CD4-positive, alpha-beta T cell (primary cell): ENCODE measurements at regions of chr6 and their contacts with region 1.

Region 1: DNA sequence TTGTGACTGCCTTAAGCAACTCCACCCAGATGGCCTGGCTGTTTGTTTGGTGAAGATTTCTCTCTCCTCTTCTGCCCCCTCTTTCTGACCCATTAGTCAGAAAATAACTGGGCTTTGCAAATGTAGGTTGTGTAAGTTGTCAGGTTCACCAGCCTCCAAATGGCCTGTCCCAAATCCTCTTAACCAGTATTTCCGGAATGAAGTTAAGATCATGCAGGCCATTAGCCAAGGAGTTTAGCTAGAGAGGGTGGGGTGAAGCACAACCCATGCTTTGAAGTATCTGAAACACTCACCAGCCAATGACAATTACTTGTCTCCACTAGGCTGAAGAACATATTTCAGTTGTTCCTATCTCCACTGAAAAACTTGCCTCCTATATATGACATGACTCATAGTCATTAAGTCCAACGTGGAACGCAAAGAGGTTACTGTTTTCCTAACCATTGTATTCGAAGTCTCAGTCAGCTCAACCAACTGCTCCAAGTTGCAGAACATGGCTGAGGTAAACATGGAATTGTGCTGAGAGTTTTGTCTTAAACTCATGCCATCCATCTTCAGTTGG is 37.5 kb upstream of the TNFAIP3 start:
- DNase-seq: no peak
- ATAC-seq: no peak
- H3K4me3 ChIP-seq: no peak overlapping the region
- H3K4me3 Mint-ChIP-seq: no peak overlapping the region
- H3K27ac ChIP-seq: no peak overlapping the region
- H3K27ac Mint-ChIP-seq: peak overlapping the region; percentile 96
- H3K4me1 ChIP-seq: peaks cover 22% of the 10 kb centered on the region
- H3K4me1 Mint-ChIP-seq: peaks cover 45% of the 10 kb centered on the region
- H3K27me3 ChIP-seq: no peaks in the 10 kb centered on the region
- H3K27me3 Mint-ChIP-seq: no peaks in the 10 kb centered on the region
- CTCF ChIP-seq: no peak

Region 2: GRCh38 chr6:137843211-137843610 is 13.6 kb after region 1 on chr6:
- CTCF ChIA-PET with region 1: no interaction called
- POLR2A ChIA-PET with region 1: interaction called, 4 read pairs
- intact Hi-C with region 1: loop called in 1 of 2 experiments (anchors 1 kb)
- DNase-seq: no peak
- ATAC-seq: no peak
- H3K4me3 ChIP-seq: no peak overlapping the region
- H3K4me3 Mint-ChIP-seq: no peak overlapping the region
- H3K27ac ChIP-seq: no peak overlapping the region
- H3K27ac Mint-ChIP-seq: no peak overlapping the region
- H3K4me1 ChIP-seq: no peaks in the 10 kb centered on the region
- H3K4me1 Mint-ChIP-seq: no peaks in the 10 kb centered on the region
- H3K27me3 ChIP-seq: no peaks in the 10 kb centered on the region
- H3K27me3 Mint-ChIP-seq: no peaks in the 10 kb centered on the region
- CTCF ChIP-seq: no peak

Region 3: DNA sequence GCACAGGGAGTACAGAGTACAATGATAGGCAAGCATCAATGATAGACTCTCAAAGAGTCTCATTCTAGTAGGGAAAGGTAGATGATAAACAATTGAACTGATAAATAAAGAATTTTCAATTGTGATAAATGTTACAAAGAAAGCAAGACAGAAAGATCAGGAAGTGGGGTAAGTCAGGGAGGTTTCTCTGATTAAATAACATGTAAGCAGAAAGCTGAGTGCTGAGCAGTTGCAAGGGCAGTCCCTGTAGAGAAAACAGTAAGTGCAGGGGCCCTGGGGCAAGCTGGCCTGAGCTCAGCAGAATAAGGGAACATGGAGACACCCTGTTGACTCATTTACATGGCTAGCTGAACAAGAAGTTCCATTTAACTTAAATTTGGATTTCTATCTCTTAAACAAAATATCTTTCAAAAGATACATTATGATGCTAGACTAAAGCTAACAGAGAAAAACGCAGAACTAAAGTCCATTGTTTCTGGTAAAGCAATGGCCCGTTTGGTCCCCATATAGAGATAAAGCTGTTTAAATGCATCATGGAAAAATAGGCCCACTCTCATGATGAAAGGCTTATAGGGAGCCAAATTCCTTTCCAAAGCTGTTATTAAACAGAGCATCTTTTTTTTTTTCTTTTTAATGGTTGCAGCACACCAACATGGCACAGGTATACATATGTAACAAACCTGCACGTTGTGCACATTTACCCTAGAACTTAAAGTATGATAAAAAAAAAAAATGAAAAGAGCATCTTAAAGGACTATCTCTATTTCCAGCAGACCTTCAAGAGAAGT is 32.1 kb after region 1 on chr6:
- CTCF ChIA-PET with region 1: interaction called, 48 read pairs
- POLR2A ChIA-PET with region 1: interaction called, 131 read pairs
- intact Hi-C with region 1: loop called (anchors 1 to 2 kb)
- DNase-seq: peak in 2 of 14 experiments; percentile 20 to 21
- ATAC-seq: no peak
- H3K4me3 ChIP-seq: no peak overlapping the region
- H3K4me3 Mint-ChIP-seq: peak overlapping the region; percentile 1
- H3K27ac ChIP-seq: no peak overlapping the region
- H3K27ac Mint-ChIP-seq: peak overlapping the region; percentile 72
- H3K4me1 ChIP-seq: peaks cover 10% of the 10 kb centered on the region
- H3K4me1 Mint-ChIP-seq: peaks cover 49% of the 10 kb centered on the region
- H3K27me3 ChIP-seq: no peaks in the 10 kb centered on the region
- H3K27me3 Mint-ChIP-seq: no peaks in the 10 kb centered on the region
- CTCF ChIP-seq: no peak